K562 (cell line): ENCODE measurements at regions of chrX and their contacts with region 1.

Region 1: DNA sequence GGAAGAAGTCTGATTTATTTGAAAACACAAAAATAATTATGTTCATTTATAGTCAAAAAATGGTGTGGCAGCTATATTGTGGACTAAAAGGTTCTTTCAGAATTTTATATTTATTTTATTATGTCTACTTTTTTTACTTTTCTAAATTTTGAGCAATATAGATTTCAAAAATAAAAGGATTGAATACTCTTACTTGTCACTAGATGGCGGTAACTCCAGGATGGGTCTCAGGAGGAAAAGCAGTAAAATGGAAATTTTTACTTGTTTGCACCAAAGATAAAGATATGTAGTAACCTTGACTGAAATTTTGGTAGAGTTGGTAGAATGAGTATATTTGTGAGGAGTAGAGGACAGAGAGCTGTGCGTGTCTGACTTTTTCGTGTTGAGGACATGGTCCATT is 14.5 kb upstream of the DACH2 start:
- DNase-seq: peak in 1 of 4 experiments; percentile 7
- ATAC-seq: no peak
- H3K4me3 ChIP-seq: no peak overlapping the region
- H3K27ac ChIP-seq: no peak overlapping the region
- H3K4me1 ChIP-seq: no peaks in the 10 kb centered on the region
- H3K27me3 ChIP-seq: no peaks in the 10 kb centered on the region
- CTCF ChIP-seq: peak in 1 of 3 experiments; percentile 52; a peak in 2 of 6 replicates
- EP300 ChIP-seq: no peak
- POLR2A ChIP-seq: no peak
- RAD21 ChIP-seq: no peak

Region 2: GRCh38 chrX:85454295-85454694 is 679.5 kb before region 1 on chrX:
- CTCF ChIA-PET with region 1: no interaction called
- POLR2A ChIA-PET with region 1: no interaction called
- in situ Hi-C with region 1: no loop called
- intact Hi-C with region 1: no loop called
- DNase-seq: no peak
- ATAC-seq: no peak
- H3K4me3 ChIP-seq: no peak overlapping the region
- H3K27ac ChIP-seq: no peak overlapping the region
- H3K4me1 ChIP-seq: no peaks in the 10 kb centered on the region
- H3K27me3 ChIP-seq: no peaks in the 10 kb centered on the region
- CTCF ChIP-seq: no peak
- EP300 ChIP-seq: no peak
- POLR2A ChIP-seq: no peak
- RAD21 ChIP-seq: no peak

Region 3: GRCh38 chrX:87299563-87300160 is 1165.9 kb after region 1 on chrX:
- CTCF ChIA-PET with region 1: no interaction called
- POLR2A ChIA-PET with region 1: no interaction called
- in situ Hi-C with region 1: no loop called
- intact Hi-C with region 1: loop called (anchors 5 kb)
- DNase-seq: peak; percentile 3 to 21 (median 8)
- ATAC-seq: no peak
- H3K4me3 ChIP-seq: no peak overlapping the region
- H3K27ac ChIP-seq: no peak overlapping the region
- H3K4me1 ChIP-seq: no peaks in the 10 kb centered on the region
- H3K27me3 ChIP-seq: no peaks in the 10 kb centered on the region
- CTCF ChIP-seq: peak in 1 of 3 experiments; percentile 54; a peak in 2 of 6 replicates
- EP300 ChIP-seq: no peak
- POLR2A ChIP-seq: no peak
- RAD21 ChIP-seq: peak in 1 of 2 experiments; percentile 56; a peak in 2 of 4 replicates